Posterior vena cava (tissue), 2 donors: ENCODE measurements at regions of chr15 and their contacts with region 1.

Region 1: DNA sequence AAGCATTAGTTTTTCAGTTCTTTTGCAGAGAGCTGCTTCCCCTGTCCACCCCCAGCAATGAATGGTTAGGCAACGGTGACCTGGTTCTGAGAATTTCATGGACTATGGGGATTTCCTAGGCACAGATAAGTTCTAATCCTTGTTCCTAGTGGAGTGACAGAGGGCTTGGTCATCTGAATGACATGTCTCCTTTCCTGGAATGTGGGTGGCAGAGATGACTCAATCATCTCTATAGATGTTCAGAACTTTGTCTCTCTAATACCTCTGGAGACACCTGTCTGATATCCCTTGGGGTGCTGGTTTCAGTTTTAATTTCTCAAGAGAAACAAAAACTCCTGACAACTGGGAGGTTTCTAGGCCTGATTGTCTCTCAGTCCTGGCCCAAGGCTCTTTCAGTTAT is 10.4 kb downstream of the PLA2G4E start:
- DNase-seq: no peak

Region 2: GRCh38 chr15:41983221-41983620 is 27.2 kb before region 1 on chr15:
- intact Hi-C with region 1: loop called in 1 of 2 experiments (anchors 1 kb)
- DNase-seq: peak; percentile 50

Region 3: GRCh38 chr15:42118650-42119445 is 108.4 kb after region 1 on chr15:
- intact Hi-C with region 1: no loop called
- DNase-seq: no peak